ENCODE measurements at regions of chr16 and their contacts with region 1.

Region 1: DNA sequence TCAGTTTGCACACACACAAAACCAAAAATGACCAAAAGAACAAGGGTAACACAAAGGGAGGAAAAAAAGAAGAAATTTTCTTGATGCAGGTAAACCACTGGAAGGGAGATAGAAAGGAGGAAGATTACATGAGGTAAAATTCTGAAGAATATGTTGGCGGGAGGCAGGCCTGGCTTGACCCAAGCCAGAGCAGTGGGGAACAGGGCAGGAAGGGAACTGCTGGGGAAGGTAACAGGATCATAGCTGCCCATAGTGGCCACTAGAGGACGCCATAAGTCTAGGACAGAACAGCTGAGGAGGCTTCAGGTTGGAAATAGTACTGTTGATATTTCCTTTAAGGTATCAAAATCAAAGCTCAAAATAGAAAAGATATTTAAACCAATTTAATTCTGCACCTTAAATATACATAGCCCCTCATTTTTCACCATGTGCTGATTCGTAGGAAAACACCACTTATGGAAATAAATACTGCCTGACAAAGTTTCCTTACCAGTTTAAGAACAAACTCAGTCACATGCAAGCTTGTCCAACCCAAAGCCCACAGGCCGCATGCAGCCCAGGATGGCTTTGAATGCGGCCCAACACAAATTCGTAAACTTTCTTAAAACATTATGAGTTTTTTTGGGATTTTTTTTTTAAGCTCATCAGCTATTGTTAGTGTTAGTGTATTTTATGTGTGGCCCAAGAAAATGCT is 15.5 kb downstream of the VPS35 start:
- DNase-seq: peak in 1 of 3 donors; percentile 63
- ATAC-seq: peak; percentile 98
- H3K4me3 ChIP-seq: no peak overlapping the region
- H3K4me1 ChIP-seq: no peaks in the 10 kb centered on the region
- CTCF ChIP-seq: peak; percentile 72

Region 2: DNA sequence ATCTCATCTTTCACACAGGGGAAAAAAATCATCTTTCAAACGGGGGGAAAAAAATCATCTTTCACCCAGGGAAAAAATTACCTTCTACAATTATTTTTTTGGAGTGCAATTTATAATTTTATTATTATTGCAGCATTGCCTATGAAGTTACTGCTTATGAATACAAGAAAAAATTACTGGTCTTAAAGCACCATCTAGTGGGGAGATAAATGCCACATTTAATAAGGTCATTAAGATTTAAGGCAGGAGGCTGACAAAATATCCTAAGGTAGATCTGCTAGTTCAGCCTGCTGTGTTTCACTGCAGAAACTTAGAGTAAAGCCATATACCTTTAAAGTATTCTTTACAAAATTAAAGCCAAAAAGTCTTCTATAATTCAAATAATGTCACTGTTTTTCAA is 65.9 kb before region 1 on chr16:
- intact Hi-C with region 1: no loop called
- DNase-seq: no peak
- ATAC-seq: no peak
- H3K4me3 ChIP-seq: no peak overlapping the region
- H3K4me1 ChIP-seq: no peaks in the 10 kb centered on the region
- CTCF ChIP-seq: no peak

Region 3: DNA sequence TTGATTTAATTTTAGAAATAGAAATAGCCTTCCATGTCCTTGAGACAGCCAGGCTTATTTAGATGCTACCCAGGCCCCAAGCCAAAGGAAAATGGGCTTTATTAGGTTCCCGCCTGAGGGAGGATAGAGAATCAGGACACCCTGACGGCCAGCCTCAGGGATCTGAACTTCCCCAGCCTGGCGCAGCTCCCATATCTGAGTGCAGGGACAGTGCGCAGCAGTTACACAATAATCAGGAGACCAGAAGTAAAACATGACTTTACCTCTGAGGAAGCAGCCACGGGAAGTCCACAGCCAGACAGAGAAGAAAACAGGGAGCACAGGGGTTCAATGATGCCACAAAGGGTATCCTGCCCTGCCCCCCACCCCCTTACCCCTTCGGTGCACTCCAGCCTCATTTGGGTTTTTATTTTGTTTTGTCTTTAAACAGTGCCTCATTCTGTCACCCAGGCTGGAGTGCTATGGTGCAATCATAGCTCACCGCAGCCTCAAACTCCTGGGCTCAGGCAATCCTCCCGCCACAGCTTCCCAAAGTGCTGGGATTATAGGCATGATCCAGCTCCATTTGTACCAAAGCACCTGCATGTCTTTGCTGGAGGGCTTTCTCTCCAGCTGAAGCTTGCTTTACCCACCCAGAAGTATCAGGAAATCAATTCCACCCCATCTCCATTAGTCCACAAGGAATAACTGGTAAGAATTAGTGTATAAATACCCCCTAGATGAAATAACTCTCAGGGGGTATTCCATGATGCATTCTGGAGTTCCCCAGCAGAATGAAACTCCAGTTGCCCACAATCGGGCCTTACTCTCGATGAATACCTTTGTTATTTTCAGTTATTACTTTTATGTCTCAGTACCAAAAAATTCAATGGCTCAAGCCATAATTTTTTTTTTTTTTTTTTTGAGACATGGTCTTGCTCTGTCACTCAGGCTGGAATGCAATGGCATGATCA is 37.9 kb after region 1 on chr16:
- intact Hi-C with region 1: no loop called
- DNase-seq: no peak
- ATAC-seq: peak; percentile 26
- H3K4me3 ChIP-seq: no peak overlapping the region
- H3K4me1 ChIP-seq: no peaks in the 10 kb centered on the region
- CTCF ChIP-seq: no peak

Region 4: DNA sequence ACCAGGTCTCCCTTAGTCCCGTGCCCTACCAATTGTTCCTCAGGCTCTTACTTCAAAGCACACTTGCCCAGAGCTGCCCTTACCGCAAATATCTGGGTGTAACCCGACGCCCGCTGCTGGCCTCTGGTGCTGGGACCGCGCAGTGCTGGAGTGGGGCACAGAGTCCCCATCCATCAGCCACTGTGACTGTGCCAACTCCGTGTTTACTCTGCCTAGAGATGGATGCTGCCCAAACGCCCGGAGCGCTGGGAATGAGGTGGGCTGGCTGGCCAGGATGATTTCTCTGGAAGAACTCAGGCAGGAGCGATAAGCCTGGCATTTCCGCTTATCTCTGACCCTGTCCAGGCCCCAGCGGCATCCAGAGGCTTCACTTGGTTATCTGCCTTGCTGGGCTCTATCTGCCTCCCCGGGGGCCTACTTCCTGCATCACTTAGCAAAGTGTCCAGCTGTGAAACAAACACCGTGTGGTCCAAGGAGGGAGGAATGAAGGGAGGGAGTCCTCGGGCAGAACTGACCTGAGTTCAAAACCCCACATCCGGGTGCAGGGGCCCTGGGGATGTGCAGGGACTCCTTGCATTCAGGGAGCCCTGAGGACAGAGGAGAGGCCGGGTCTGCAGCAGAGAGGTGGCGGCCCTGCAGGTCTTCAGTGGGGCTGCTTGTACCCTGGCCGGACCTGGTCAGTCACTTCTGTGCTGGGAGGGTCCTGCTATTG is 84.0 kb after region 1 on chr16:
- intact Hi-C with region 1: no loop called
- DNase-seq: no peak
- ATAC-seq: peak; percentile 16
- H3K4me3 ChIP-seq: no peak overlapping the region
- H3K4me1 ChIP-seq: no peaks in the 10 kb centered on the region
- CTCF ChIP-seq: no peak

Region 5: DNA sequence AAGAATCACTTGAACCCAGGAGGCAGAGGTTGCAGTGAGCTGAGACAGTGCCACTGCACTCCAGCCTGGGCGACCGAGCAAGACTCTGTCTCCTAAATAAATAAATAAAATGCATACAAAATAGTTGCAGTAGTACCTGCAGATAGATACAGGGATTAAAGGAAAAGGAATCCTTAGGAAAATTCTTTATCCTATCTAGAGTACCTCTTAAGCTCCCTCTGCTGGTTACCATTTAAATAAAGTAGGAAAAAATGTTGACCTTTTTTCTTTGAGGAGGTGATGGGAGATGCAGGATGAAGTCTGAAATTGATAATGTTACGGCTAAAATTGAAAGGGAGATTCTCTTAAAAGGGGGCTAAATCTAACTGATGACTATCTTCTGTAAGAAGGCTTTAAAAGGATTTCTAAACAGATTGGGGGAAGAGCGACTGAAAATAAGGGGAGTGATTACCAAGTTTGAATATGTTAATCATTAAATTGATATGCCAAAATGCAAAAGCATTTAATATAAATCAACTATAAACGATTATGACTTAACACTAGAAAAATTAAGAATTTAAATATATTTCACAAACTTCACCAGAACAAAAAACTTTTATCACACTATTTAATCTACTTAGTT is 128.1 kb after region 1 on chr16:
- intact Hi-C with region 1: loop called in 1 of 2 experiments (anchors 10 kb)
- DNase-seq: no peak
- ATAC-seq: no peak
- H3K4me3 ChIP-seq: no peak overlapping the region
- H3K4me1 ChIP-seq: no peaks in the 10 kb centered on the region
- CTCF ChIP-seq: no peak

Region 6: DNA sequence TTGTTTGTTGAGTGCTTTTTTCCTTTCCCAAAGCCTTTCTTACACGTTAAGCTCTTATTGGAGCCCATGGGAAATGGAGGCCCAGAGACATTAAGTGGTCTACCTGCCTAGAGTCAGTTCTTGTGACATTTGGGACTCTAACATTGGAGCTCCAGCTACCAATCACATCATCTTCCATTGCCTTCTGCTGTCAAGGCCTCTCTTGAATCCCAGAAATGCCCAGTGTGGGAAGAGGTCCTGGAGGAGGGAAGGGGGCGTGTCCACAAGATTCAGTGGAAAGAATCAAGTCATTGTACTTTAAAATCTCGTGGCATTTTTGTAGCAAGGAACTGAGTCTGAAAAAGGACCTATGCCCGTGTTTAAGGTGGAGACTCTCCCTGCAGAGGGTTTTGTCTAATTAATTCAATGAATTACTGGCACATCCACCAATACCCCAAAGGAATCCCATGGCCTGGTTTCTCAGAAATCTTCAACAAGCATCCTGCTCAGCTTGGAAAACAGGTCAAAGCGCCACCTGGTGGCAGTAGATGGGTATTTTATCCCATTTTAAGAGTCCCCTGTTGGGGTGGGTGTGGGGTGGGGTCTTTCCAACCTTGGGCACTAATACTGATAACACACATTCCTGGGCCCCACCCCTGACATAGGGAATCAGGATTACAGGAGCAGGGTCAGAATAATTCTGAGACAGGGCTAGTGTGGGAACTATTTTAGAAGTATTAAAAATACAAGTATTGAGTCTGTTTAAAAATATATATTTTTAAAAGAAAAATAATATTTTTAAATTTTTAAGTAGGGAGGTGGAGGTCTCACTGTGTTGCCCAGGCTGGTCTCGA is 235.3 kb after region 1 on chr16:
- intact Hi-C with region 1: no loop called
- DNase-seq: peak in 1 of 3 donors; percentile 66
- ATAC-seq: peak; percentile 59
- H3K4me3 ChIP-seq: no peak overlapping the region
- H3K4me1 ChIP-seq: peaks cover 4% of the 10 kb centered on the region
- CTCF ChIP-seq: peak; percentile 31

Measured in mucosa of descending colon (tissue), 3 donors.